Heart right ventricle (tissue), 16 donors: ENCODE measurements at regions of chrX and their contacts with region 1.

Region 1: GRCh38 chrX:1591102-1591900 is at the start of gene AKAP17A:
- DNase-seq: peak; percentile 94 to 97
- ATAC-seq: peak; percentile 95 to 98 (median 97)
- H3K4me3 ChIP-seq: peak within 1 kb of the TSS; percentile 67 to 88 (median 76)
- H3K27ac ChIP-seq: peak within 1 kb of the TSS; percentile 62 to 94 (median 90)
- H3K4me1 ChIP-seq: peaks cover 0 to 34% (median 18%) of the 10 kb centered on the region in 9 donors
- H3K27me3 ChIP-seq: no peaks in the 10 kb centered on the region
- CTCF ChIP-seq: peak in 4 of 9 donors; percentile 10 to 47 (median 29)
- total RNA-seq, gene AKAP17A: 12.2 to 20.3 (median 15.8) TPM

Region 2: DNA sequence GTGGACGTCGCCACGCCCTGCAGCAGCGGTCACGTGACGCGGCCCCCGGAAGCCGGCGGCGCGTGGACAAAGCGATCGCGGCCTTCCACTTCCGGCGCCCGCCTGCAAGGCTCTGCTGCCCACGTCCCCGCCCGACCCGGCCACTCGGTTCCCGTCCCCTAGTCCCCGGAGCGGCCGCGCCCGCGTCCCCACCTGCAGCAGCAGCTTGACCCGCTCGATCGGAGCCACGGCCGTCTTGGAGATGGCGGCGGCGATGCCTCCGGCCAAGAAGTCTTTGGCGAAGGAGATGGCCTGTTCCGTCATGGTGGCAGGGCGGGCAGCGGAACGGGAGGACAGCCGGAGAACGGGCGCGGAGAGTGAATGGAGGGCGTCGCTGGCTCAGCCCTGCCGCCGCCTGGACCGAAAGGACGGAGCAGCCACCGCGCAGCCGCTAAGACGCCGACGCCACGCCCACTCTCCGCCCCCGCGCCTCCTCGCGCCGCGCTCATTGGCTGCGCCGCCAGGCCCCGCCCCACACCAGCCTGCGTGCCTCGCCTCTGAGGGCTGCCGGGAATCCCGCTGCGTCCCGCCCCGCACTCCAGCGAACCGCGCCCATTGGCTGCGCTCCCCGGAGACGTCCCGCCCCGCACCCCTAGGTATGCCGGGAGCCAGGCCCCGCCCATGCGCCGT is 199.5 kb before region 1 on chrX and contains the start of gene SLC25A6:
- intact Hi-C with region 1: loop called in 3 of 10 experiments (anchors 5 to 10 kb)
- DNase-seq: peak; percentile 99 to 100
- ATAC-seq: peak; percentile 93 to 97 (median 96)
- H3K4me3 ChIP-seq: peak within 1 kb of the TSS; percentile 75 to 100 (median 97)
- H3K27ac ChIP-seq: peak within 1 kb of the TSS; percentile 86 to 100 (median 99)
- H3K4me1 ChIP-seq: peaks cover 18 to 65% (median 42%) of the 10 kb centered on the region in 9 donors
- H3K27me3 ChIP-seq: no peaks in the 10 kb centered on the region
- CTCF ChIP-seq: peak in 5 of 9 donors; percentile 20 to 42 (median 28)
- total RNA-seq, gene SLC25A6: 128 to 186 (median 141) TPM